ENCODE measurements at regions of chr19 and their contacts with region 1.

Region 1: GRCh38 chr19:18588611-18589379 is at the start of gene REX1BD:
- DNase-seq: peak; percentile 89
- H3K4me3 Mint-ChIP-seq: peak within 1 kb of the TSS; percentile 84
- H3K27ac Mint-ChIP-seq: peak within 1 kb of the TSS; percentile 95
- H3K4me1 Mint-ChIP-seq: peaks cover 44% of the 10 kb centered on the region
- H3K27me3 Mint-ChIP-seq: peaks cover 2% of the 10 kb centered on the region
- total RNA-seq, gene REX1BD: 73.0 to 85.2 TPM

Region 2: GRCh38 chr19:18349524-18350128 is 239.2 kb before region 1 on chr19:
- CTCF ChIA-PET with region 1: no interaction called
- POLR2A ChIA-PET with region 1: no interaction called
- DNase-seq: peak; percentile 32
- H3K4me3 Mint-ChIP-seq: no peak overlapping the region
- H3K27ac Mint-ChIP-seq: no peak overlapping the region
- H3K4me1 Mint-ChIP-seq: peaks cover 8% of the 10 kb centered on the region
- H3K27me3 Mint-ChIP-seq: no peaks in the 10 kb centered on the region

Region 3: DNA sequence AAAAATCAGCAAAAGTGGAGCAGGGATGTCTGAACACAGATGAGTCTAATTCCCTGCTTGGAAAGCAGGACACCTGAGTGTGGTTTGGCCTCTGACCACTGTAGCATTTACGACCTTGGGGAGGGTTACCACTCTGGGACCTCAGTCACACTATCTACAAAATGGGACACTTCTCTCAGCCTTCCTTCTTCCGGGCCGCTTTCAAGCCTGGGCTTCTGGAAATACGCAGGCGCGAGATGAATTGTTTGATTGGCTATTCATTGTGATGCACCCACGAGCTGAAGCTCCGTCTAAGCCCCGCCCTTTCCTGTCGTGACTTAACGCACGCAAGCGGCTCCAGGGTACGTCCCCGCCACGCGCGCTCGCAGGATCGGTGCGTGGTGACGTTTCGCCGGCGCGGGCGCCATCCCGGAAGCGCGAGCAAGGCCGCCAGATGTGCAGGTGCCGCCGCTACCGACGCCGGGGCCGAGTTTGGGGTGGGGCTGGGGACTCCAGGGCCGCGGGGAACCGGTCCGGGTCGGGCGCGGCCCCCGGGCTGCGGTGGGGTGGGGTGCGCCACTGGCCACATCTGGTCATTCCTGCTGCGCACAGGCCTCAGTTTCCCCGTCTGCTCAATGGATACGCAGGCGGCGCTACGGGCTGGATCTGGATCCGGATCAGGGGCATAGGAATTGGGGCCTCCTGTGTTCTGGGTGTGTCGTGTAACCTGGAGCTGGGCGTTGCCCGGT is 31.2 kb before region 1 on chr19 and contains the start of gene KXD1:
- CTCF ChIA-PET with region 1: interaction called, 13 read pairs
- POLR2A ChIA-PET with region 1: no interaction called
- DNase-seq: peak; percentile 100
- H3K4me3 Mint-ChIP-seq: peak within 1 kb of the TSS; percentile 83
- H3K27ac Mint-ChIP-seq: peak within 1 kb of the TSS; percentile 97
- H3K4me1 Mint-ChIP-seq: peaks cover 27% of the 10 kb centered on the region
- H3K27me3 Mint-ChIP-seq: no peaks in the 10 kb centered on the region
- total RNA-seq, gene KXD1: 95.4 to 100.0 TPM

Region 4: GRCh38 chr19:18571564-18572300 is 17.1 kb before region 1 on chr19 and contains the start of gene UBA52:
- CTCF ChIA-PET with region 1: interaction called, 41 read pairs
- POLR2A ChIA-PET with region 1: interaction called, 14 read pairs
- DNase-seq: peak; percentile 98
- H3K4me3 Mint-ChIP-seq: peak within 1 kb of the TSS; percentile 92
- H3K27ac Mint-ChIP-seq: peak within 1 kb of the TSS; percentile 95
- H3K4me1 Mint-ChIP-seq: peaks cover 28% of the 10 kb centered on the region
- H3K27me3 Mint-ChIP-seq: no peaks in the 10 kb centered on the region
- total RNA-seq, gene UBA52: 1,627 to 1,778 TPM

Region 5: DNA sequence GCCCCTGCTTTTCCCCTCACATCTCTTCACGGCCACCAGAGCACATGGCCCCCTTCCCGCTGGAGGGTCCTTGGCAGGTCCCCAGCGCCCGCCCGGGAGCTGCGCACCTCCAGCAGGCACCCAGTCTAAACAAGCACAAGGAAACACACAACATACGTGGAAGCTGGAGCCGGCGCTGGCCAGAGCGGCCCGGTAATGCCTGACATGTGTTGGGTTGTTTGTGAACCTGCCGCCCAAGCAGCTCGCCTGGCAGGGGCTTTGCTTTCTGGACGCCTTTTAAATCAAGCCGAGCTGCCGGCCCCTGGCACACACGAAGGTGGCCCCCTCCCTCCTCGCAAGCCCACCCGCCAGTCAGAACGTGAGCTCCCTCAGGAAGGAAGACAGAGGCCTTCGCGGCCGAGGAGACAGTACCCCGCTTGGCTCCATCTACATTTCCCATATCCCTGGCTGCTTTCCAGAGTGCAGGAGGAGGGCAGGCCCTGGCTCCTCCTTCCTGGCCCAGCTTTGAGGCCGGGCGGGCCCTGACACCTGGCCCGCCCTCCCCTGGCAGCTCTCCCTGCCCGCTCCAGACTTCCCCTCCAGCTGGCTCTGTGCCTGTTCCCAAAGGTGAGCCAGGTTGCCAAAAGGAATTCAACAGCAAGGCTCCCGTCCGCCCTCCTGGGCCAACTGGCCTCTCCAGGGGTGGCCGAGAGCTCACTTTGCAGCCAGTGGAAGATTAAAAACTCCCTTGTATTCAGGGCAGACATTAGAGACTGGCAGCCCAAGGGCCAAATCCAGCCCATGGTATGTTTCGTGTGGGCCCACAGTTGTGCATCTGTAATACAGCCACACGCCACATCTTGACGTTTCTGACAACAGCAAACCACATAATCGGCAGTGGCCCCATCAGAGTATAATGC is 173.6 kb after region 1 on chr19:
- CTCF ChIA-PET with region 1: no interaction called
- POLR2A ChIA-PET with region 1: no interaction called
- DNase-seq: no peak
- H3K4me3 Mint-ChIP-seq: no peak overlapping the region
- H3K27ac Mint-ChIP-seq: no peak overlapping the region
- H3K4me1 Mint-ChIP-seq: no peaks in the 10 kb centered on the region
- H3K27me3 Mint-ChIP-seq: no peaks in the 10 kb centered on the region

Region 6: GRCh38 chr19:18809150-18809868 is 220.5 kb after region 1 on chr19:
- CTCF ChIA-PET with region 1: no interaction called
- POLR2A ChIA-PET with region 1: no interaction called
- DNase-seq: no peak
- H3K4me3 Mint-ChIP-seq: no peak overlapping the region
- H3K27ac Mint-ChIP-seq: no peak overlapping the region
- H3K4me1 Mint-ChIP-seq: peaks cover 3% of the 10 kb centered on the region
- H3K27me3 Mint-ChIP-seq: peaks cover 5% of the 10 kb centered on the region